Activated T-helper 2 cell treated with anti-CD3 and anti-CD28 coated beads, Interferon-gamma antibody, Interleukin-2, Interleukin-4, amounts not matched to agents 10 μg/mL and 5 μg/mL and 100 μg/mL, durations not matched to agents 14 hours and 24 hours and 36 hours (primary cell): ENCODE measurements at regions of chr12 and their contacts with region 1.

Region 1: DNA sequence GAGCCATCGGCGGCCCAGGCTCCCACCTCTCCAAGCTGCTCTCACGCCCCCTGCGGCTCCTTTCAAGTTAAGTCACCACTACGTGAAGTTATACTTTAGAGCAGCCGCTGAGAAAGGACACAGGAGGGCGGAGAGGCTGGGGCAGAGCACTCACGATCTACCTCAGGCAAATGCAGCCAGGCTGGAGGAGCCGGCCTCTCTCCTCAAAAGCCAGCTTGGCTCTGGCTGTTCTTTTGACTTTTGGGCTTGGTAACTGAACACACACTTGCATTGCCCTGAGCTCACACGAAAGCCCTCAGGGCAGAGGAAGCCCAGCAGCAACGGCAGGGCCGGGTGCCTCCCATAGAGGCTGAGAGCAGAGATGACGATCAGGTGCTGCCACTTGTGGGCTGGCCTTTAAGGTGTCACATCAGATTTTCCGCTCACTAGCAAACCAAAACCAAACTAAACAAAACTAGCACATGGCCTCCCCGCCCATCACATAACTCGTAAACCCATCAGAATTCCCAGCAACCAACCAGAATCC is 75.2 kb downstream of the PITPNM2 start:
- DNase-seq: peak; percentile 81
- H3K4me3 Mint-ChIP-seq: peak overlapping the region; percentile 83
- H3K27ac Mint-ChIP-seq: peak overlapping the region; percentile 99
- H3K4me1 Mint-ChIP-seq: peaks cover 44% of the 10 kb centered on the region
- H3K27me3 Mint-ChIP-seq: no peaks in the 10 kb centered on the region

Region 2: DNA sequence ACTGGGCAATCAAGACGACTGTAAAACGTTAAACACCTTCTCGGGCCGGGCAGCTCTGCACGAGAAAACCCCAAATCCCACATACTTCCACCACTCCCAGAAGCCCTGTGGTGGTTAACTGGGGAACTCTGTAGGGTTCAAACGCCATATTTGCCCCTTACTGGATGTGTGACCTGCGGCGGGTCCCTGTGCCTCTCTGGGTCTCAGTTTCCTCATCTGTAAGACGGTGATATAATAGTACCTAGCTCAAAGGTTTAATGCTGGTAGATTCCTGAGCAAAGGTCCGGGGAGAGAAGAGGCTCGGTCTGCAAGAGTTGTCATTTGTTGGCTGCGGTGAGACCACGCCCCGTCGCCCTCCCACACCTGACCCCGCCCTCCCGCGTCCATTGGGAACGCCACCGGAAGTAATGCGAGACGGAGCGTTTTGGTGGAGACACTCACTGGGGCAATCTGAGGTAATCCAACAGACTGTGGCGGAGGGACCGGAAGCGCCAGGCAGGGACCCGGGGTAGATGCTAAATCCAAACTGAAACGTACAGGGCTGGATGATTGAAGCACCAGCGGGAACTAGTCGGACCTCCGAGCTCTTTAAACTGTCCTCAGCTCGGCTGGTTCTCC is 101.3 kb before region 1 on chr12:
- intact Hi-C with region 1: loop called (anchors 2 kb)
- DNase-seq: peak; percentile 98
- H3K4me3 Mint-ChIP-seq: peak overlapping the region; percentile 93
- H3K27ac Mint-ChIP-seq: peak overlapping the region; percentile 98
- H3K4me1 Mint-ChIP-seq: peaks cover 11% of the 10 kb centered on the region
- H3K27me3 Mint-ChIP-seq: no peaks in the 10 kb centered on the region

Region 3: DNA sequence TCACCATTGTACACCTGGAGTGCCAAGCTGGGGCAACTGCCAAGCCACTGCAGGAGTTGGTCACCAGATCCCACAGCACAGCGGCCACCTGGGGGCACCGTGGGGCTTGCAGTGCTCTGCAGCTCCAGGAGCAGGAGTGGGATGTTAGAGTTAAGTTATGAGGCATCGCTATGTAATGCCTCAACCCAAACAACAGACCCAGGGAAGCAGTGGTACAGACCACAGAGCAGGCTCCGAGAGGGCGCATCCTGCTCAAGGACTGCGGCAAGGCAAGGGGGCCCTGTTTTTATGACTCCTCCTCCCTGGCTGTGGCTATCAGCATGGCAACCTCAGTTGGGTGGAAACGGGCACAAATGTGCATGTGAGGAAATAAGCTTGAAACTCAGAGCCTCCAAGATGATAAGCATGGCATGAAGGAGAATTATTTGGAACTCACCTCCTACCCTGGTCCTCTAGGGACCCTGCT is 32.1 kb before region 1 on chr12:
- intact Hi-C with region 1: loop called (anchors 1 kb)
- DNase-seq: peak; percentile 56
- H3K4me3 Mint-ChIP-seq: no peak overlapping the region
- H3K27ac Mint-ChIP-seq: peak overlapping the region; percentile 56
- H3K4me1 Mint-ChIP-seq: peaks cover 16% of the 10 kb centered on the region
- H3K27me3 Mint-ChIP-seq: no peaks in the 10 kb centered on the region

Region 4: GRCh38 chr12:123089631-123090353 is 14.1 kb after region 1 on chr12:
- intact Hi-C with region 1: no loop called
- DNase-seq: no peak
- H3K4me3 Mint-ChIP-seq: no peak overlapping the region
- H3K27ac Mint-ChIP-seq: no peak overlapping the region
- H3K4me1 Mint-ChIP-seq: peaks cover 5% of the 10 kb centered on the region
- H3K27me3 Mint-ChIP-seq: no peaks in the 10 kb centered on the region

Region 5: DNA sequence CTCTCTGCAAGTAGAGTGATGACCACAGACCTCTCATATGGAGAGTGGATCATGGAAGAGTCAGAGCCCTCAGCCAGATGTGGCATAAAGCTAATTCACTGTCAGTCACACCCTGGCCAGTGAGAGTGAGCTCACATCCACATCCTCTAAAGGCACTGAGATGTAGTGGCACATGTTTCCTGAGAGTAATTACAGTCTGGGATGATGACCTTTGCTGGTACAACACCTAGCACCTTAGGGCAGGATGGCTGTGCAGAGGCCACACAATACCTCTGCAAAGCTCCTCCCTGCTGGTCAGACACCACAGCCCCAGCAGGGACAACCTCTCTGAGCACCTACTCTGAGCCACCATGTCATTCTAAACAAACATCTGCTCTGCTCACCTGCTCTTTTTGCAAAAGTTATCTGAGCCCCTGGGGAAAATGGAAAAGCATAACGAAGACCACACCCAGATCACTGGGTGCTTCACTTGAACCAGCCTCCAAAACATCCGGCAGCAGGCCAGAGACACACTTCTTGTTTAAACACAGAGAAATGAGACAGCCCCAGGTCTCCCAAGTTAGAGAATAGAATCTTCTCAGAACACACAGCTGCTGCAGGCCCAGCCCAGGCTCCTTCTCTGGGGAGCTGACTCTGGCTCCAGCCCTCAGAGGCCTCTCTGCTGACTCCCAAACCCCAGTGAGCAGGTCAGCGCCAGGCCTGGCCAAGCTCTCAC is 44.9 kb after region 1 on chr12:
- intact Hi-C with region 1: loop called (anchors 2 kb)
- DNase-seq: peak; percentile 15
- H3K4me3 Mint-ChIP-seq: no peak overlapping the region
- H3K27ac Mint-ChIP-seq: peak overlapping the region; percentile 73
- H3K4me1 Mint-ChIP-seq: peaks cover 39% of the 10 kb centered on the region
- H3K27me3 Mint-ChIP-seq: no peaks in the 10 kb centered on the region

Region 6: DNA sequence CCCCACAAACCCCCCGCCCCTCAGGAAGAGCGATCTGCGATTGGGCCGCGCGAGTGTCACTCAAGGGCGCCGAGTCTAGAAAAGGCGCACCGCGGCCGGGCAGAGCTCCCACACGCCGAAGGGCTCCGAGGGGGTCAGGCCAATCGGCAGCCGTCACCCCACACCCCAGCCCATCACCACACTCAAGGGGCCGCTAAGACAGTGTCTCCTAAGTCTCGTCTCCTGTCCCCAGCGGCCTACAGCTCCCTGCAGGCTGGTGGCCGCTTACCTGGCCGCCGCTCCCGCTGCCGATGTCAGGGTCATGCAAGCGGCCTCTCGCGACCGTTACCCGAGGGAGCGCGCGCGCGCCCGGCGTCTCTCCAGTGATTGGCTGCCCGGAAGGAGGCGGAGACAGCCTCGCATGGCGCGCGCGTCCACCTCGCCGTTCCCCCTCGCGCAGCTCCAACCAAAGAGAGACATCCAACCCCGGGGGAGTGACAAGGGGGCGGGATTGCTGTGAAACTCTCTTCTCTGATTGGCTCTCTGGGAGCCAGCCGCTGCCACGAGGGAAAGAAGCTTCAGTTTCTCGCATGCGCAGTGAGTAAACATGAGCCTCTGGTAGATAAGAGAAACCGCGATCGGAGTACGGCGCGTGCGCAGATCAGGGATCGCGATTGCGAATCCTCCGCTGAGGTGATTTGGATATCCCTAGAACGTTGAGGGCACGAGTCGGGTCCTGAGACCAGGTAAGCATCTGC is 157.3 kb after region 1 on chr12 and contains the starts of genes MPHOSPH9 and MTRFR:
- intact Hi-C with region 1: loop called (anchors 1 kb)
- DNase-seq: peak; percentile 99
- H3K4me3 Mint-ChIP-seq: peak within 1 kb of the TSS; percentile 96
- H3K27ac Mint-ChIP-seq: peak within 1 kb of the TSS; percentile 91
- H3K4me1 Mint-ChIP-seq: peaks cover 50% of the 10 kb centered on the region
- H3K27me3 Mint-ChIP-seq: no peaks in the 10 kb centered on the region
- total RNA-seq, gene MPHOSPH9: 97.0 and 99.7 TPM in 2 replicates
- total RNA-seq, gene MTRFR: 28.9 and 31.1 TPM in 2 replicates